Mammary epithelial cell (primary cell): ENCODE measurements at regions of chrX and their contacts with region 1.

Region 1: DNA sequence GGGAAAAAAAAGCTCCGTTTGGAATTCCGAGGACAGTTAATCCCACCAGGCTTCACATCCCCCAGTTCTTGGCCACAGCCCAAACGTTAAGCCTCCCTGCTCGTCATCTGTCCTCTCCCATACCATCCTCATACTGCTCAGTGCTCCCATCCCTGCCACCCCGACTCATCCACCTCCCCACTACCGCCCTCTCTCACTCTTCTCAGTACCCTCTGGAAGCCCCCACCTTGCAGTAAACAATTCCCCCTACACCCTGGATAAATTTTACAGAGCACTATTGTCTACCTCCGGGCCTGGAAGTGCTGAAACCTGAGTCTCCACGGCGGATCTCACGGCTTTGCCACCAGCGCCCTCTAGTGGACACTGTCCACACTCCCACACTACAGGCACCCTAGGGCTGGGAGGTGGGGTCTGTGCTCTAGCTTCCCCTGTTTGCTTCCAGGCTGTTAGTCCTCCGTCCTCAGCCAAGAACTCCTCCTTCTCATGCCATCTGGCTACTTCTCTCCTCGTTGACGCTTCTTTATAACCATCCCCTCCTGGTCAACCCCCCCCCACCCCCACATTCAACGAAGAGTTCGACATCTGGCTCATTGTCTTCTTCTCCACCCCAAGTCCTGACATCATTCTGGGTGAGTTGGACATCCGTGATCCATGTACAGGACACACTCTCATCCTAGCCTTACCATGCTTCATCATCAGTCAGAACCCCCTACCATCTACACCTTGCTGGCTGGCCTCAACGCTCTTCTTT is 54.5 kb downstream of the RTL9 start:
- DNase-seq: peak; percentile 48
- H3K4me3 ChIP-seq: no peak overlapping the region
- H3K27ac ChIP-seq: no peak overlapping the region
- H3K4me1 ChIP-seq: peaks cover 35% of the 10 kb centered on the region
- H3K27me3 ChIP-seq: no peaks in the 10 kb centered on the region
- CTCF ChIP-seq: peak; percentile 79 to 93

Region 2: GRCh38 chrX:110012834-110013485 is 400.2 kb before region 1 on chrX:
- CTCF ChIA-PET with region 1: no interaction called
- dilution Hi-C with region 1: no loop called
- in situ Hi-C with region 1: no loop called
- intact Hi-C with region 1: loop called (anchors 10 kb)
- DNase-seq: no peak
- H3K4me3 ChIP-seq: no peak overlapping the region
- H3K27ac ChIP-seq: no peak overlapping the region
- H3K4me1 ChIP-seq: no peaks in the 10 kb centered on the region
- H3K27me3 ChIP-seq: no peaks in the 10 kb centered on the region
- CTCF ChIP-seq: no peak